AG04449 (cell line): ENCODE measurements at regions of chr9 and their contacts with region 1.

Region 1: DNA sequence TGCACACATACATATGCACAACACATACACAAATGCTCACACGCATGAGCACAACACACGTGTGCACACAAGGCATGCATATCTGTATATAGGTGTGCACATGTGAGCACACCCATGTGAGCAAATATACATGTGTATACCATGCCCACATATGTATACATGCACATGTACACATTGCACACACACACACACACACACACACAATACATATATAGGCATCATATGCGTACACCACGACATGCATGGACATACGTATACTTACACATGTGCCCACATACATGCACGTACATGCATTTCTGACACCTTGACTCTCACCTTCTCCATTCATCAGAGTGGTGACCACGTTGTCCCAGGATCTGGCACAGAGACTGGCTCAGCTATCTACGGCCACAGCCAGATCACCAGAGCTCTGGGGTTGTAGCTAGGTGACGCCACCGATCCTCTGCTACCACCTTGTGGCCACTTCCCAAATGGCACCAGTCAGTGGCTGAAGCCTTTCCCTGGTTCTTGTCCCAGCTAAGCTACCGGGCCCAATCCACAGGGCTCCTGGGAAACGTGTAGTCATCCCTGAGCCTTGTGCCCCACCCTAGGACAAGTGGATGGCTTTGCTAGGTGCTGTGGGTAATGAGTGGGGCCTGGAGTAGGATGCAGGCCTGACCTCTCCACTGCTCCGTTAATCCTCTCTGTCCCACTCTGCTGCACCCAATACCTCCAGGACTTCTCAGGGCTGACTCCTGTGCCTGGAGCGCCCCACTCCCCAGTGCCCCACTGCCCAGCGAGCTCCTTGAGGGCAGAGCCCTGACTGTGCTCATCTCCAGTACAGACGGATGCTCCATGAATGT is 194.4 kb downstream of the RGS3 start:
- DNase-seq: no peak
- H3K4me3 ChIP-seq: no peak overlapping the region
- CTCF ChIP-seq: peak; percentile 96

Region 2: DNA sequence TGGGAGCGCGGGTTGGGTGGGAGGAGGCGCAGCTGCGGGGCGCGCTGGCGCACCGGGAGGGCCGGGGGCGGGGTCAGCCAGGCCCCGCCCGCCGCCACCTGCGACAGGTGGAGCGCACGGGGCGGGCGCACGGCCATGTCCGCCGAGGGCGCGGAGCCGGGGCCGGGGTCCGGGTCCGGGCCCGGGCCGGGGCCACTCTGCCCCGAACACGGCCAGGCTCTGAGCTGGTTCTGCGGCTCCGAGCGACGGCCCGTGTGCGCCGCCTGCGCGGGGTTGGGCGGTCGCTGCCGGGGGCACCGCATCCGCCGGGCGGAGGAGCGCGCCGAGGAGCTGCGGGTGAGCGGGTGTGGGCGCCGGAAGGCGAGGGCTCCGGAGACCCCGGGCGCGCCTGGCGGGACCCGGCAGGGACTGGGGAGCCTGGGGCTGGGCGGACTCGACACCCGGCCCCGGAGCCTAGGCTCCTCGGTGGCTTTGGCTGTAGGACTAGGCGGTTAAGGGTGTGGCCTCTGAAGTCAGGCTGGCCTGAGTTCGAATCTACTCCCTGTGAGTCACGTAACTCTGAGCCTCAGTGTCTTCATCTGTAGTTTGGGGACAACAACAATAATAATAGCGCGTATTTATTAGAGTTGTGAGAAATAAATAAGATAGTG is 308.4 kb before region 1 on chr9 and contains the start of gene BSPRY:
- CTCF ChIA-PET with region 1: interaction called, 12 read pairs
- POLR2A ChIA-PET with region 1: no interaction called
- DNase-seq: no peak
- H3K4me3 ChIP-seq: no peak within 1 kb of the TSS
- CTCF ChIP-seq: no peak

Region 3: GRCh38 chr9:113427629-113428028 is 230.3 kb before region 1 on chr9:
- CTCF ChIA-PET with region 1: interaction called, 17 read pairs
- POLR2A ChIA-PET with region 1: no interaction called
- DNase-seq: no peak
- H3K4me3 ChIP-seq: no peak overlapping the region
- CTCF ChIP-seq: no peak

Region 4: GRCh38 chr9:113463418-113464285 is 194.3 kb before region 1 on chr9 and contains the start of gene RGS3:
- CTCF ChIA-PET with region 1: interaction called, 13 read pairs
- POLR2A ChIA-PET with region 1: no interaction called
- DNase-seq: no peak
- H3K4me3 ChIP-seq: no peak within 1 kb of the TSS
- CTCF ChIP-seq: no peak

Region 5: GRCh38 chr9:113578882-113579282 is 79.0 kb before region 1 on chr9:
- CTCF ChIA-PET with region 1: interaction called, 70 read pairs
- POLR2A ChIA-PET with region 1: no interaction called
- DNase-seq: peak; percentile 74
- H3K4me3 ChIP-seq: no peak overlapping the region
- CTCF ChIP-seq: no peak

Region 6: GRCh38 chr9:113622600-113623400 is 35.1 kb before region 1 on chr9:
- CTCF ChIA-PET with region 1: interaction called, 33 read pairs
- POLR2A ChIA-PET with region 1: no interaction called
- DNase-seq: no peak
- H3K4me3 ChIP-seq: no peak overlapping the region
- CTCF ChIP-seq: no peak

Region 7: GRCh38 chr9:113669522-113670115 is 11.7 kb after region 1 on chr9:
- CTCF ChIA-PET with region 1: interaction called, 136 read pairs
- POLR2A ChIA-PET with region 1: no interaction called
- DNase-seq: no peak
- H3K4me3 ChIP-seq: no peak overlapping the region
- CTCF ChIP-seq: no peak

Region 8: GRCh38 chr9:114820776-114821501 is 1163.0 kb after region 1 on chr9:
- CTCF ChIA-PET with region 1: no interaction called
- POLR2A ChIA-PET with region 1: no interaction called
- DNase-seq: no peak
- H3K4me3 ChIP-seq: no peak overlapping the region
- CTCF ChIP-seq: no peak